Heart left ventricle (tissue), 16 donors: ENCODE measurements at regions of chr5 and their contacts with region 1.

Region 1: DNA sequence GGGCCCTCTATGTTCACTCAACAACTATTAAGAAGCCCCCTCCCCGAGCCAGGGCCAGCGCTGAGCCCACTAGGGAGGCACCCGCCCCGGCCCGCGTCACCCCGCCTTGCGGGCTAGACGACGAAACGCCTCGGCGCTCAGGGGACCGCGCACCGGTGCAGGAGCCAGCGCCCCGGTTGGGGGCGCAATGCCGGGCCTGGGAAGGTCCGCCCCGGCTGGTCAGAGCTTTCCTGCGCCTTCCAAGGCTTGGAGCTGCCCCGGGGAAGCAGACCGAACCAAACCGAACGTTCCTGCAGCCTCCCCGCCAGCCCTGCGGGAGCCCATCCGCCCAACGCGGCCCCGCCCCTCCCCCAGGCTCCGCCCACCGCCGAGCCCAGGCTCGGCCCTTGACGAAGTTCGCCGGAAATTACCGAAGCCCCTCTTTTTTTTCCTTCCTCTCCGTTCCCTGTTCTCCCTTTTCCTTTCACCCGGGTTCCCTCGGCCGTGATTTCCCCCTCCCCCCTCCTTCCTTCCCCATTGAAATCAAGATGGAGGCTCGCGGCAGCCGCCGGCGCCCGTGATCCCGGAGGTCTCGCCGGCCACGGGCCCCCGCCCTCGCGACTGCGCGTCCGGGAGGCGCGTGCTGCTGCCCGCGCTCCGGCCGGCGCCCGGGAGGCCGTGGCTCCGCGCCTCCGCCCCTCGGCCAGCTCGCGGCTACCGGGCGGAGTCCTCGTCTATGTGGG is at the start of gene TRIO:
- DNase-seq: peak; percentile 90 to 95 (median 94)
- ATAC-seq: peak; percentile 77 to 88 (median 84)
- H3K4me3 ChIP-seq: peak within 1 kb of the TSS; percentile 84 to 97 (median 90)
- H3K27ac ChIP-seq: peak within 1 kb of the TSS; percentile 82 to 97 (median 95)
- H3K4me1 ChIP-seq: peaks cover 6 to 44% (median 32%) of the 10 kb centered on the region in 12 donors
- H3K27me3 ChIP-seq: no peaks in the 10 kb centered on the region
- CTCF ChIP-seq: peak; percentile 28 to 87 (median 56)
- POLR2A ChIP-seq: peak in 1 of 2 donors; percentile 41
- total RNA-seq, gene TRIO: 45.4 to 99.1 (median 63.2) TPM

Region 2: DNA sequence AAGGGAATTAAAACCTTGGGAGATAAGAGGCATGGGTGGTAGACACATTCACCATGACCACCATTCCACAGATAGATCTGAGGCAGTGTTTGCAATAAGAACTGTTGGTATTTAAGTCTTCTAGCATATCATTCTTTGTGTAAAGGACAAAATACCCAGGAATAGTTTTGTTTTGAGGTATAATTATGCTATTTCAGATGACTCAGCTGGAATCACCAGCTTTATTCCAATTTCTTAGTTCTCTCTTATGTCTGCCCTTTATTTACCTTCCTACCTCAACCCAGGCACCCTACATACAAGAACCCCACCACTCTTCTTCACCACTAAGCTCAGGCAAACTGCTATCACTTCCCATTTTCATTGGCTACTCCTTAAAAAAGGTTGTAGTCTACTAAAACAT is 94.6 kb before region 1 on chr5:
- intact Hi-C with region 1: no loop called
- DNase-seq: no peak
- ATAC-seq: no peak
- H3K4me3 ChIP-seq: no peak overlapping the region
- H3K27ac ChIP-seq: no peak overlapping the region
- H3K4me1 ChIP-seq: no peaks in the 10 kb centered on the region
- H3K27me3 ChIP-seq: no peaks in the 10 kb centered on the region
- CTCF ChIP-seq: no peak
- POLR2A ChIP-seq: no peak

Region 3: DNA sequence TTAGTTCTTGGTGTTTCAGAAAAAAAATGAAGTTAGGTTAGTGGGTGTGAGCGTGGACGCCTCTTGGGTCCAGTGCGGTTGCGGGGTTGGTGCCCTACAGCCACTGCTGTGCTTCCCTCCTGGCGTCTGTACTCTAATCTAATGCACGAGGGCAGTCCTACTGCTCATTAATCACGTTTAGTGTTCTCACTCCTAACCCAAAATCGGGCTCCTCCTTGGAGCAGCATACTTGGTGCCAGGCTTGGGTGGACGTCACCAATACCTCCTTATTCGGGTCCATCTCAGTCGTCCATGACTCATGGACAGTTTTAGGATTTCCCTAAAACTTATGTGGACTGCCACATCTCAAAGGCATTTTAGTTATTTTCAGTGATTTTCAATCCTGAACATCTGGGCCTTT is 41.7 kb after region 1 on chr5:
- intact Hi-C with region 1: loop called in 5 of 10 experiments (anchors 2 to 5 kb)
- DNase-seq: no peak
- ATAC-seq: no peak
- H3K4me3 ChIP-seq: no peak overlapping the region
- H3K27ac ChIP-seq: peak overlapping the region; percentile 19 to 90 (median 66)
- H3K4me1 ChIP-seq: peaks cover 22 to 84% (median 62%) of the 10 kb centered on the region in 12 donors
- H3K27me3 ChIP-seq: no peaks in the 10 kb centered on the region
- CTCF ChIP-seq: no peak
- POLR2A ChIP-seq: no peak

Region 4: GRCh38 chr5:14190194-14191164 is 47.5 kb after region 1 on chr5:
- intact Hi-C with region 1: loop called in 3 of 10 experiments (anchors 5 to 10 kb)
- DNase-seq: no peak
- ATAC-seq: peak; percentile 47 to 86 (median 74)
- H3K4me3 ChIP-seq: peak overlapping the region in 4 of 12 donors; percentile 3 to 23 (median 10)
- H3K27ac ChIP-seq: peak overlapping the region in 11 of 12 donors; percentile 10 to 90 (median 56)
- H3K4me1 ChIP-seq: peaks cover 13 to 81% (median 53%) of the 10 kb centered on the region in 12 donors
- H3K27me3 ChIP-seq: no peaks in the 10 kb centered on the region
- CTCF ChIP-seq: no peak
- POLR2A ChIP-seq: no peak

Region 5: DNA sequence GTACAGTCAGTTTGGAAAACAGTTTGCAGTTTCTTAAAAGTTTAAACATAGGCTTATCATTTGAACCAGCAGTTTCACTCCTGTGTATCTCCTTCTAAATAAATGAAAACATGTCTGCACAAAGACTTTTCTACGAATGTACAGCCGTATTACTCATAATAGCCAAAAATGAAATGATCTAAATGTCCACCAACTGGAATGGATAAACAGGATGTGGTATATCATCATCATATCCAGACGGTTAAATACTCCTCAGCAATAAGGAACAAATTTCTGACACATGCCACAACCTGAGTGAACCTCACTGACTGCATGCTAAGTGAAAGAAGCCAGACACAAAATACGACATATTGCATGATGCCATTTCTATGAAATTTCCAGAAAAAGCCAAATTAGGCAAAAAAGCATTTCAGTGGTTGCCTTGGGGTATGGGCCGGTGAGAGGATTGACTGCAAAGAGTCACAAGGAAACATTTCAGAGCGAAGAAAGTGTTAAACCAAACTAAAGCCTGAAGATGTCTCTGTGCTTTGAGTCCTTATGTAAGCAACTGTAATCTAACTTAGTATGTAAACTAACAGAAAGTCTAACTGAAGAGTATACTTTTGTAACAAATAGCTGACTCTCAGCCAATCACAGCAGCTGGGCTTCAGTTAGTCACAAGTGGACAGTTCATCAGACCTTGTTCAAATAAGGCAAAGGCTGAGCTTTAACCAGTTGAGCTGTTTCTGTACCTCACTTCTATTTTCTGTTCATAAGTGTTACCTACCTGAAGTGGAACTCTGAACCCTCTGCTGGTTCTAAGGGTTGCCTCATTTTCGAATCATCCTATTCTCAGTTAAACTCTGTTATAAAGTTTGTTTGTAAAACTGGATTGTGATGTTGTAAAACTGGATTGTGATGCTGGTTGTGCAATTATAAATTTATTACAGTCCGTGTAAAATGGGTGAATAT is 65.4 kb after region 1 on chr5:
- intact Hi-C with region 1: loop called in 2 of 10 experiments (anchors 5 kb)
- DNase-seq: no peak
- ATAC-seq: peak in 2 of 4 donors; percentile 29 to 54
- H3K4me3 ChIP-seq: no peak overlapping the region
- H3K27ac ChIP-seq: peak overlapping the region in 2 of 12 donors; percentile 35 to 63
- H3K4me1 ChIP-seq: peaks cover 5 to 83% (median 44%) of the 10 kb centered on the region in 12 donors
- H3K27me3 ChIP-seq: no peaks in the 10 kb centered on the region
- CTCF ChIP-seq: no peak
- POLR2A ChIP-seq: no peak

Region 6: GRCh38 chr5:14264604-14265316 is 121.8 kb after region 1 on chr5:
- intact Hi-C with region 1: loop called in 9 of 10 experiments (anchors 2 to 5 kb)
- DNase-seq: peak; percentile 89 to 95 (median 93)
- ATAC-seq: peak; percentile 89 to 95 (median 94)
- H3K4me3 ChIP-seq: peak overlapping the region in 9 of 12 donors; percentile 4 to 45 (median 27)
- H3K27ac ChIP-seq: peak overlapping the region in 6 of 12 donors; percentile 1 to 38 (median 10)
- H3K4me1 ChIP-seq: peaks cover 12 to 73% (median 49%) of the 10 kb centered on the region in 12 donors
- H3K27me3 ChIP-seq: no peaks in the 10 kb centered on the region
- CTCF ChIP-seq: no peak
- POLR2A ChIP-seq: peak in 1 of 2 donors; percentile 28

Region 7: GRCh38 chr5:14270209-14270702 is 127.3 kb after region 1 on chr5:
- intact Hi-C with region 1: loop called (anchors 1 to 5 kb)
- DNase-seq: peak in 4 of 5 donors; percentile 71 to 80 (median 74)
- ATAC-seq: peak; percentile 91 to 97 (median 93)
- H3K4me3 ChIP-seq: no peak overlapping the region
- H3K27ac ChIP-seq: peak overlapping the region in 11 of 12 donors; percentile 54 to 86 (median 74)
- H3K4me1 ChIP-seq: peaks cover 15 to 65% (median 43%) of the 10 kb centered on the region in 12 donors
- H3K27me3 ChIP-seq: no peaks in the 10 kb centered on the region
- CTCF ChIP-seq: peak; percentile 67 to 93 (median 86)
- POLR2A ChIP-seq: no peak